ENCODE measurements at regions of chr19 and their contacts with region 1.

Region 1: DNA sequence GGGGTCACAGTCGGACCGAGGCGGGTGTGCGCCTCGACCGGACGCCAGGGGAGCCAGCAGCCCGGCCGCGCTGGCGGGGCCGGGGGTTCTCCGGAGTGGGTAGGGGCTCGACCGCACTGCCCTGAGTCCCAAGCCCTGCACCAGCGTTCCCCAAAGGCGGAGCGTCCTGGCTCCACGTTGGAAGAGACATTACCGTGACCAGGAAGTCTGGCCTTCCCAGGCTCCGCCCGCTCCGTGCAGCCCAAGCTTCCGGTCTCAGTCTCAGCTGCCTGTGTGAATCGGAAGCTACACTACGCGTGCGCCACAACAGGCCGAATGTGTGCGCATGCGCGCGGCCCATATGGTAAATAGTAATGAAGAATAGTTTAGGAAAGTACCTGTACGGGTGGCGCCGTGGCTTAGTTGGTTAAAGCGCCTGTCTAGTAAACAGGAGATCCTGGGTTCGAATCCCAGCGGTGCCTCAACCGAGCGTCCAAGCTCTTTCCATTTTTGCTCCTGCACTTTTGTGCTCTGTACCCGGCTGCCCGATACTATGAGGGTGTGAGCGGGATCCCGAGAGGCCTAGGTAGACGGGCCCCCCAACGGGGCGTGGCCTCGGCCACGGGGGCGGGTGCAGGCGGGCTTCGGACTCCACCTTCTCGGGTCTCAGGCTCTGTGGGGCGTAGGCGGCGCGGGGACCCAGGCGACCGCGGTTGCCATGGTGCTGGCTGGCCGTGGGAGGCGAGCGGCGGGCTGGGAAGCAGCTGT is 17.3 kb upstream of the LRP3 start:
- DNase-seq: peak; percentile 86 to 100 (median 96)
- ATAC-seq: peak; percentile 69
- H3K4me3 ChIP-seq: peak overlapping the region; percentile 91
- H3K4me3 Mint-ChIP-seq: peak overlapping the region; percentile 100
- H3K27ac ChIP-seq: peak overlapping the region; percentile 82 to 97
- H3K27ac Mint-ChIP-seq: peak overlapping the region; percentile 100
- H3K4me1 ChIP-seq: peaks cover 39% of the 10 kb centered on the region
- H3K4me1 Mint-ChIP-seq: peaks cover 52% of the 10 kb centered on the region
- H3K27me3 ChIP-seq: no peaks in the 10 kb centered on the region
- H3K27me3 Mint-ChIP-seq: peaks cover 10% of the 10 kb centered on the region
- CTCF ChIP-seq: no peak

Region 2: DNA sequence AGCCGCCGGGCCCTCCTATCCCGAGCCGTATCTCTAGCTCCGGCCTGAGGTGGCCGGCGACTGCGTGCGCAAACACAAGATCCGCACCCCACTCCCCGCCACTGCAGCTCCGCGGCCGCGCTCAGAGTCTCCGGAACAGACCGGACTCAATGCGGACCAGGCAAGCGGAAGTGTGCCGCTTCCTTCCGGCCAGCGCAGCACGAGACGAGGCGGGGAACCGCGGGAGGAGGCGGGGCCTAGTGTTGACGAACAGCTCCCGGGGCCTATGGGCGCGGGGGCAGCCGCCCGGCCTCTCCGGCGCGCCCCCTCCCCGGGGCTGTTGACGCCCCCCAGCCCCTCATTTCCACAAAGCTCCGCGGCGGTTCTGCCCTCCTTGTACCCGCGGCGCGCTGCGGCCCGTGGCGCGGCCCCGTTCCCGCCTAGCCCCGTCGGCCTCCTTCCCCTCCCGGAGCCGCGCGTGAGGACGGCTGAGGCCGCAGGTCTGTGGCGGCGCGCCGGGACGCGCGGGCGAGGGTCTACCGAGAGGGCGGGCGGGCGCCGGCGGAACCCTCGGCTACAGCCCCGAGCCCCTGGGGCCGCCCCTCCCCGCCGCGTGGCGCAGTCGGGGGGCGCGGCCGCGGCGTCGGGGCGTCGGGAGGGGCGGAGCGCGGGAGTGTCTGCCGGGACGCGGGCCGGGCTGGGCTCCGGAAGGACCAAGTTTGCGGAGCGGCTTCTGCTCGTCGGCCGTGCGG is 771.2 kb before region 1 on chr19 and contains the start of gene DPY19L3:
- CTCF ChIA-PET with region 1: no interaction called
- POLR2A ChIA-PET with region 1: interaction called, 5 read pairs
- intact Hi-C with region 1: loop called in 1 of 2 experiments (anchors 5 kb)
- DNase-seq: peak; percentile 77 to 93 (median 85)
- ATAC-seq: peak; percentile 88
- H3K4me3 ChIP-seq: peak within 1 kb of the TSS; percentile 76
- H3K4me3 Mint-ChIP-seq: peak within 1 kb of the TSS; percentile 89
- H3K27ac ChIP-seq: peak within 1 kb of the TSS; percentile 72 to 80
- H3K27ac Mint-ChIP-seq: peak within 1 kb of the TSS; percentile 91
- H3K4me1 ChIP-seq: peaks cover 19% of the 10 kb centered on the region
- H3K4me1 Mint-ChIP-seq: peaks cover 30% of the 10 kb centered on the region
- H3K27me3 ChIP-seq: no peaks in the 10 kb centered on the region
- H3K27me3 Mint-ChIP-seq: no peaks in the 10 kb centered on the region
- CTCF ChIP-seq: no peak
- total RNA-seq, gene DPY19L3: 7.3 to 8.5 TPM

Region 3: DNA sequence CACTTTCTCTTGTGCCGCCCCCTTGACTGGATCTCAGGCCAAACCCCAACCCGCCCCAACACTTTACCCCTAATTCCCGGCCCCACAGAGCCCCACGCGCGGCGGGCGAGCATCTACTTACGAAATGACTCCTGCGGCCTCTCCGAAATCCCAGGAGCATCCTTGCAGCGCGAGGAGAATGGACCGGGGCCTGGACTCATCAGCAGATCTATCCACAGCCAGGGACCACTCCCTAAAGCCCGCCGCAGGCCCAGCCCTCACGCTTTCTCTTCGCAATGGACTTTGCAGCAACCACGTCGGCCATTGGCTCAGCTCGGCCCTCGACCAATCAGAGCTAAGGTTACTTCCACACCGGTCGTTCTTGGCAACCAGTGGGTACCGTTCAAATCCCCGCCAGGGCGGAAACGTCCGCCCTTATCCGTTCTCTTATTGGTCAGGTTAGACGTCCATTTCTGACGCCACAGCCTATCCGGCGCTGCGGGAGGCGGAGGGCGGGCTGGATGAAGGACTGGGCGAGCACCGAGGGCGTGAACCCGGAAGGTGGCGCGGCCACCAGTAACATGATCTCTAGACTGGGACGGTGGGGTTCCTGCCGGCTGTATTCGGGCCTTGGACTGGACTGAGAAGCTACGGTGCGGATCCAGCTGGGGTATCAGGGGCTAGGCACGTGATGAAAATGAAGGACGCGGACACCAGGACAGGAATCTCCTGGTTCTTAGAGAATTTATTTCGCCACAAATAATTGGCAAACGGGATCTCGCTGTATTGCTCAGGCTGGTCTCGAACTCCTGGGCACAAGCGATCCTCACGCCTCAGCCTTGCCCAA is 204.9 kb before region 1 on chr19 and contains the starts of genes CEP89 and FAAP24:
- CTCF ChIA-PET with region 1: interaction called, 3 read pairs
- POLR2A ChIA-PET with region 1: interaction called, 5 read pairs
- intact Hi-C with region 1: loop called in 1 of 2 experiments (anchors 5 kb)
- DNase-seq: peak; percentile 95 to 100 (median 98)
- ATAC-seq: peak; percentile 99
- H3K4me3 ChIP-seq: peak within 1 kb of the TSS; percentile 60
- H3K4me3 Mint-ChIP-seq: peak within 1 kb of the TSS; percentile 96
- H3K27ac ChIP-seq: peak within 1 kb of the TSS; percentile 55 to 76
- H3K27ac Mint-ChIP-seq: peak within 1 kb of the TSS; percentile 79
- H3K4me1 ChIP-seq: peaks cover 23% of the 10 kb centered on the region
- H3K4me1 Mint-ChIP-seq: peaks cover 22% of the 10 kb centered on the region
- H3K27me3 ChIP-seq: no peaks in the 10 kb centered on the region
- H3K27me3 Mint-ChIP-seq: no peaks in the 10 kb centered on the region
- CTCF ChIP-seq: no peak
- total RNA-seq, gene CEP89: 4.0 to 5.1 TPM
- total RNA-seq, gene FAAP24: 0.91 to 1.4 TPM

Region 4: GRCh38 chr19:33134571-33135041 is 42.2 kb before region 1 on chr19:
- CTCF ChIA-PET with region 1: interaction called, 3 read pairs
- POLR2A ChIA-PET with region 1: interaction called, 17 read pairs
- intact Hi-C with region 1: loop called in 1 of 2 experiments (anchors 5 kb)
- DNase-seq: peak in 13 of 14 experiments; percentile 12 to 70 (median 48)
- ATAC-seq: peak; percentile 97
- H3K4me3 ChIP-seq: peak overlapping the region; percentile 10
- H3K4me3 Mint-ChIP-seq: peak overlapping the region; percentile 30
- H3K27ac ChIP-seq: no peak overlapping the region
- H3K27ac Mint-ChIP-seq: no peak overlapping the region
- H3K4me1 ChIP-seq: peaks cover 5% of the 10 kb centered on the region
- H3K4me1 Mint-ChIP-seq: peaks cover 6% of the 10 kb centered on the region
- H3K27me3 ChIP-seq: no peaks in the 10 kb centered on the region
- H3K27me3 Mint-ChIP-seq: no peaks in the 10 kb centered on the region
- CTCF ChIP-seq: no peak

Region 5: GRCh38 chr19:33156334-33156733 is 20.5 kb before region 1 on chr19:
- CTCF ChIA-PET with region 1: interaction called, 21 read pairs
- POLR2A ChIA-PET with region 1: interaction called, 116 read pairs
- intact Hi-C with region 1: loop called in 1 of 2 experiments (anchors 1 kb)
- DNase-seq: no peak
- ATAC-seq: no peak
- H3K4me3 ChIP-seq: no peak overlapping the region
- H3K4me3 Mint-ChIP-seq: no peak overlapping the region
- H3K27ac ChIP-seq: no peak overlapping the region
- H3K27ac Mint-ChIP-seq: no peak overlapping the region
- H3K4me1 ChIP-seq: peaks cover 36% of the 10 kb centered on the region
- H3K4me1 Mint-ChIP-seq: peaks cover 33% of the 10 kb centered on the region
- H3K27me3 ChIP-seq: no peaks in the 10 kb centered on the region
- H3K27me3 Mint-ChIP-seq: no peaks in the 10 kb centered on the region
- CTCF ChIP-seq: no peak

Region 6: GRCh38 chr19:33521480-33522370 is 344.9 kb after region 1 on chr19 and contains the start of gene PEPD:
- CTCF ChIA-PET with region 1: no interaction called
- POLR2A ChIA-PET with region 1: interaction called, 3 read pairs
- intact Hi-C with region 1: loop called in 1 of 2 experiments (anchors 5 kb)
- DNase-seq: peak; percentile 51 to 97 (median 77)
- ATAC-seq: peak; percentile 90
- H3K4me3 ChIP-seq: peak within 1 kb of the TSS; percentile 73
- H3K4me3 Mint-ChIP-seq: peak within 1 kb of the TSS; percentile 77
- H3K27ac ChIP-seq: no peak within 1 kb of the TSS
- H3K27ac Mint-ChIP-seq: peak within 1 kb of the TSS; percentile 34
- H3K4me1 ChIP-seq: peaks cover 25% of the 10 kb centered on the region
- H3K4me1 Mint-ChIP-seq: peaks cover 31% of the 10 kb centered on the region
- H3K27me3 ChIP-seq: no peaks in the 10 kb centered on the region
- H3K27me3 Mint-ChIP-seq: no peaks in the 10 kb centered on the region
- CTCF ChIP-seq: no peak
- total RNA-seq, gene PEPD: 17.5 to 23.0 TPM